ENCODE measurements at regions of chr11 and their contacts with region 1.

Region 1: DNA sequence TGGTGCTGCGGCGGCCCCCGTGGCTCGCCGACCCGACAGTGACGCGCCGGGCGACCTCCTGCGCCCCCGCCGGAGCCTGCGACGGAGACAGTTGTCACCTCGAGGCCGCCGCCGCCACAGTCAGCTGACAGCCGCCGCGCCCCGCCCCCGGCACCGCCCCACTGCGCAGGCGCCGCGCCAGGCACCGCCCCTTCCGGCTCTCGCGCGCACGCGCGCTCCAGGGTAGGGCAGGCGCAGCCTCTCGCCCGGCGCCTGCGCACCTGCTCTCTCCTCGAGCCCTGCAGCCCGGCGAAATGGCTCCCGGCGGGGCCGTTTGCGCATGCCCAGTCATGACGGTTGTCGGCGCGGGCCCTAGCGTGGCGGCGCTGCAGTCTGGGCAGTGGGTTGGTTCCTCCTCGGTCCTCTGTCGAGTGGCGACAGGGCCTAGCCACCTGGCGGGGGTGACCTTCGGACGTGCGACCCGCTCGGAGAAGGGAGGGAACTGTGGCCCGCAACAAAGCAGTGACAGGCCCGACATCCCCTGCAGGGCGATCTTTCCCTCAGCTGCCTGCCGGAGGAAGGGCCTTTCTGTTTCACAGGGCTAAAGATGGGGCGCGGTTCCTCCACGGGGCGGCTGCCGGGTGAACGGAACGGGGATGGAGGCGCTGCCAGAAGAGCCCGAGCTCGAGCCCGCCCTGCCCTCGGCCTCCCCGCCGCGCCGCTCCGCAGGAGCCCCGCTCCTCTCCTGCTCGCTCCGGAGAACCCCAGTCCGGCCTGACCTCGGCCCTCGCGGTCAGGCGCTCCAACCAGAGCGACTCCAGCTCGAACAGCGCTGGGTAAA is at the start of gene TOLLIP:
- DNase-seq: peak; percentile 92 to 95
- ATAC-seq: peak; percentile 88
- H3K4me3 ChIP-seq: peak within 1 kb of the TSS; percentile 71 to 92 (median 76)
- H3K27ac ChIP-seq: peak within 1 kb of the TSS; percentile 90 to 95 (median 95)
- H3K4me1 ChIP-seq: peaks cover 25 to 39% of the 10 kb centered on the region in 2 donors
- H3K27me3 ChIP-seq: no peaks in the 10 kb centered on the region
- CTCF ChIP-seq: peak; percentile 8 to 45 (median 31)
- POLR2A ChIP-seq: peak; percentile 99
- total RNA-seq, gene TOLLIP: 49.8 to 91.7 (median 85.0) TPM

Region 2: GRCh38 chr11:1262172-1263006 is 47.3 kb before region 1 on chr11:
- in situ Hi-C with region 1: no loop called
- intact Hi-C with region 1: loop called (anchors 1 kb)
- DNase-seq: peak; percentile 86 to 91
- ATAC-seq: peak; percentile 84 to 94
- H3K4me3 ChIP-seq: peak overlapping the region; percentile 58 to 69 (median 64)
- H3K27ac ChIP-seq: peak overlapping the region; percentile 79 to 87 (median 83)
- H3K4me1 ChIP-seq: peaks cover 4 to 18% of the 10 kb centered on the region in 2 donors
- H3K27me3 ChIP-seq: no peaks in the 10 kb centered on the region
- CTCF ChIP-seq: no peak
- POLR2A ChIP-seq: peak; percentile 50 to 52

Region 3: DNA sequence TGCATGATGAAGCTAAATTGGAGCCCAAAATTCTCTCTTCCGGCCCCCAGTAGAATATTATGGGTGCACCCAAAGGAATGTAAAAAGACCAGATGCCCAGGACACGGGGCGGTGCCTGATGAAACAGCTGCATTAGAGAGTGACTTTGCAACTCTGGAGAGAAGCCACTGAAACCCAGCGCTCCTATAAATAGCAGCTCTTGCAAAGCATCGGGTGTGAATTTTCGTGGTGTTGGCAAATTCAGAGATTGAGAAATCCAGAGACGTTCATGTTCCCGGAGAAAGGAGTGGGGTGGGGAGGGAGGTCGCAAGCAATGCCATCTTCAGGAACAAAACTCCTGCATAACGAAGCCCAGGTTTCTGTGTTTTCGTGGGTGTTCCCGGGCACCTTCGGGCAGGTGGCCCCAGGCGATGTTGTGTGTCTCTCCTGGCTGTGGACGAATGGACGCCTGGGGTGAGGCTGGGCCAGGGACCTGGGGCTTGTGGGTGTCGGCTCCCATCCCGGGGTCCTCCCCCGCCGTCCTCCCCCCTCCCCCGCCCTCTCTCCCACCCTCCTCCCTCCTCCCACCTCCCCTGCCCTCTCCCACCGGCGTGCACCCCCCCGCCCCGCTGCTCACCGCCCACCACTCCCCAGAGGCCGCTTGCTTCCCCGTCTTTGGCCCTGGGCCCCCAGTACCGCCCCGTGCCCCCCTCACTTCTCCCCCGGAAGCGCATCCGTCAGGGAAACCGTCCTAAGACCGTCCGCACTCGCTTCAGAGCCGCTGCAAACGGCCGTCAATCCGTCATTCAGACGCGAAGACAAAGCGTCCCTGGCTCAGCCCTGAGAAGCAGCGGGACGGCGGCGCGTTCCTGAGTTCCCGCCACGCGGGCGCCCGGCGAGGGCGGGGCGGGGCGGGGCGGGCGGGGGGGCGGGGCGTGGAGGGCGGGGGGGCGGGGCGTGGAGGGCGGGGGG is 26.4 kb after region 1 on chr11:
- in situ Hi-C with region 1: no loop called
- intact Hi-C with region 1: loop called (anchors 1 kb)
- DNase-seq: peak; percentile 91 to 96
- ATAC-seq: peak; percentile 95
- H3K4me3 ChIP-seq: peak overlapping the region; percentile 53 to 86 (median 61)
- H3K27ac ChIP-seq: peak overlapping the region; percentile 89 to 98 (median 94)
- H3K4me1 ChIP-seq: peaks cover 11 to 12% of the 10 kb centered on the region in 2 donors
- H3K27me3 ChIP-seq: peaks cover 0 to 2% (median 0%) of the 10 kb centered on the region in 3 donors
- CTCF ChIP-seq: no peak
- POLR2A ChIP-seq: peak; percentile 70 to 76

Region 4: DNA sequence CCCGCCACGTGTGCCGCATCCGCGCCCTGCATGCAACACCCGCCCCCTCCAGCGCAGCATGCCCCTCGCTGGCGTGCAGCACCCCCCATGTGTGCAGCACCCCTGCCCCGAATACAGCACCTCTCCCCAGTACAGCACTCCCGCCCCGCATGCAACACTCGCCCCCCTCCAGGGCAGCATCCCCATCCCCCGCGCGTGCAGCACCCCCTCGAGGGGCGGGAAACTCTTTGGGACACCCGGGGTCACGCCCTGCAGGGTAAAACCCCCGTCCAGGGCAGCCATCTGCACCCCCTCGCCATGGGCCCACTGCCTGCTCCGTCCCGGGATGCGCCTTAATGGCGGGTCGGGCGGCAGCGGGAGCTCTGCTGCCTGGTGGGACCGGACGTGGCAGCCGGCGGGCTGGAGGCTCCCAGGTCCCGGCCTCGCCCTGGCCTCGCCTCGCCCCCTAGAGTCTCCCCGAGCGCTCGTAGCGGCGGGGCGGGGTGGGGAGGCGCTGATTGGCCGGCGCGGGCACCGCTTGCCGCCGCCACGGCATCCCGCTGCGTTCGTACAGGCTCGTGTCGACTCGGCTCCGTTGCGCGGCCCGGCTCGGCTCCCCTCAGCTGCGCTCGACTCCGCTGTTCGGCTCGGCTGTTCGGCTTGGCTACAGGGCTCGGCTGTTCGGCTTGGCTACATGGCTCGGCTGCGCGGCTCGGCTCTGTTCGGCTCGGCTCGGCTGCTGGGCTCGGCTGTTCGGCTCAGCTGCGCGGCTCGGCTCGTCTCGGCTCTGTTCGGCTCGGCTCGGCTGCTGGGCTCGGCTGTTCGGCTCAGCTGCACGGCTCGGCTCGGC is 79.6 kb after region 1 on chr11:
- in situ Hi-C with region 1: no loop called
- intact Hi-C with region 1: loop called (anchors 1 kb)
- DNase-seq: peak; percentile 94
- ATAC-seq: peak; percentile 96 to 98
- H3K4me3 ChIP-seq: peak overlapping the region; percentile 44 to 67 (median 50)
- H3K27ac ChIP-seq: peak overlapping the region in 1 of 4 donors; percentile 16
- H3K4me1 ChIP-seq: peaks cover 4 to 8% of the 10 kb centered on the region in 2 donors
- H3K27me3 ChIP-seq: peaks cover 45 to 50% (median 48%) of the 10 kb centered on the region in 3 donors
- CTCF ChIP-seq: peak in 1 of 5 experiments; percentile 32
- POLR2A ChIP-seq: no peak

Region 5: DNA sequence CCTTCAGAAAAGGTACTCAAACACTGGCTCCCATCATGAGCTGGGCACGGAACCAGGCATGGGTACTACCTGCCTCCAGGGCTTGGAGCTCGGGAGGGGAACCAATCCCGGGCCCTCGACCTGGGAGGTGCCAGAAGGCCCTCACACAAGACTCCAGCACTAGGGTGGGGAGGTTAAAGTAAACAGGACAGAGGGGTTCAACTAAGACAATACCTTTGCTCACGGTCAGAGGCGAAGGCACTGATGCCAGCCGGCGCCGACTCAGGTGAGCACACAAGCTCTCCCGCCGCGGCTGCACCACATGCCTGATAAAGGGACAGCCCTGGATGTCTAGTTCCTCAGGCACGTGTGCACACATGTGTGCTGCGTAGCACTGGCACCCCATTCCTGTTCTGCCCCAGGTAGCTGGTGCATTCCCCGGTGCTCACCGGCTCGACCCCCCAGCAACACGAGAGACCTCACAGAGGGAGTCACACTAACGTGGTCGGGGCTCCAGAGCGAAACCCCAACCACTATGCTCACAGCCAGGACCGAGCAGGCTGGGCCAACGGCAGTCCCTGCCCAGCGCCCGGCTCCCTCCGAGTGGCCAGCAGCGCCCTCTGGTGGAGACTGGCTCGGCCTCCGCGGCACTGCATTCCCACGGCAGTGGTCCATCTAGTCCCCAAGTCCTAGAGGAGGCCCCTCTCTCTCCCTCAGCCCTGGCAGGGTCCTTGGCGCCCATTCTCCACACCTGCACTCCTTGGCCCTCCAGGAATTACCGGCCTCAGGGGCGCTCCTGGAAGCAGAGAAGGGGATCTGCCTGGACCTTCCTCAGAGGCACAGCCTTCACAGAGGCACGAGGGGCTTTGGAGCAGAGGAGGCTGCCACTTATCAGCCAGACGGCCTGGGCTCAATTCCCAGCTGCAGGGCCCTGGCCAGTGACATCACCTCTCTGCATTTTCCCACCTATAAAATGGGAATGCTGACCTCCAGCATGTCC is 205.7 kb after region 1 on chr11:
- in situ Hi-C with region 1: loop called in 2 of 4 experiments (anchors 10 to 25 kb)
- intact Hi-C with region 1: no loop called
- DNase-seq: peak; percentile 48 to 64
- ATAC-seq: peak; percentile 85 to 88
- H3K4me3 ChIP-seq: peak overlapping the region in 2 of 4 donors; percentile 20 to 30
- H3K27ac ChIP-seq: peak overlapping the region in 1 of 4 donors; percentile 45
- H3K4me1 ChIP-seq: peaks cover 38 to 50% of the 10 kb centered on the region in 2 donors
- H3K27me3 ChIP-seq: no peaks in the 10 kb centered on the region
- CTCF ChIP-seq: peak; percentile 85 to 97 (median 95)
- POLR2A ChIP-seq: no peak

Region 6: DNA sequence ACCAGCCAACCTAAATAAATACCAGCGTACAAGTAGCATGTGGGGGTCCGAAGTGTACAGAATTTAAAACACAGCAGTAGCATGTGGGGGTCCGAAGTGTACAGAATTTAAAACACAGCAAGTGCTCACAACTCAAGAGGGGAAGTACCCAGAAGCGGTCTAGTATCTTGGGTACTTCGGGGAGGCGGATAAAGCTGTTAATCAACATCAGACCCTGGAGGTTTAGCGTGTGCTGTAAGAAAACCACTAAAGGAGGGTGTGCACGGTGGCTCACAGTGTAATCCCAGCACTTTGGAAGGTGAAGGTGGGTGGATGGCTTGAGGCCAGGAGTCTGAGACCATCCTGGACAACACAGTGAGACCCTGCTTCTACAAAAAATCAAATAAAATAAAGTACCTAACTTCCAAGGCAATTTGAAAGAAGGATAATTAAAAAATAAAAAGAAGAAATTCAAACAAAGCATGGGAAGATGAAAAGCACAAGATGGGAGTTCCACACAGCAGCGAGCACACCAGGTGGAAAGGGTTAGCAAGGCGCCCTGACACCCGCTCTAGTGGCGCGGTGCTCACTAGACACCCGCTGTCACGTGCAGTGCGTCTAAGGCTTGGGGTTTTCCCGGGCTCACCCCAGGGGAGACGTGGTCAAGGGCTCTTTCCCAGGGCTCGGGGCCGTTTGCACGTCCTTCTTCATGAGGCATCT is 211.8 kb after region 1 on chr11:
- in situ Hi-C with region 1: loop called in 2 of 4 experiments (anchors 10 to 25 kb)
- intact Hi-C with region 1: no loop called
- DNase-seq: no peak
- ATAC-seq: no peak
- H3K4me3 ChIP-seq: no peak overlapping the region
- H3K27ac ChIP-seq: no peak overlapping the region
- H3K4me1 ChIP-seq: peaks cover 38% of the 10 kb centered on the region in 2 donors
- H3K27me3 ChIP-seq: no peaks in the 10 kb centered on the region
- CTCF ChIP-seq: no peak
- POLR2A ChIP-seq: no peak

Region 7: DNA sequence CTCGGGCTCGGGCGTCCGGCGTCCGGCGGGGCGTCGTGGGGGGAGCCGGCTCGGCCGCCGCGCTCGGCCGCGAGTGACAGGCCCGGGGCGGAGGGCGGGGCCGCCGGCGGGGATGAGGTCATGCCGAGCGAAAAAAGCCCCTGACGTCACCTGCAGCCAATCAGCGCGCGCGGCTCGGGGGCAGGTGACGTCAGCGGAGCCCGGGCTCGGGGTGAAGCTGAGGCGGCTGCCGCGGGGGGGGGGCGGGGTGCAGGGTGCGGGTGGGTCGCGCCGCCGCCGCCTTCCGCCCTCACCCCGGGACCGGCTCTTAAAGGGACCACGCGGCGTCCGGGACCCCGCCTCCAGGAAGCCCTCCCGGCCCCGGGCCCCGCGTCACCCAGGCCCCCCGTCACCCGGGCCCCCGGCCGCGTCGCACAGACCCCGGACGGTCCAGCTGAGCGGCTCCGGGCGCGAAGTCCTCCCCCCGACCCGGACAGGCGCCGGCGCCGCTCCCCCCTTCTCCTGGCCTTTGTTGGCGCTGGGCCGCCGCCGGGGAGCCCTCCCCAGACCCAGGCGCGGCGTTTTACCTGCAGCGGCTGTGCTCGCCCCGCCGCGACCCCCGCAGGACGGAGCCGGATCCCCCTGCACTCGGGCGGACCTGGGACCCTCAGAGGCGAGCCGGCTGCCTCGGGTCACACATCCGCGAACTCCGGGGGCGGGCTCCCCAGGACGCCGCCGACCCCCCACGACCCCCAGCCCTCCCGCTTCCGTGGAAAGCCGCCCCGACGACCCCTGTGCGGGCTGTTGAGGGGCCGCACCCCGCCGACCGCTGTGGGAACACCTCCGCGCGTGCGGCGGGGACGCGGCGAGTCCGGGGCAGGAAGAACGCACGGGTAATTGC is 262.7 kb after region 1 on chr11 and contains the start of gene DUSP8:
- in situ Hi-C with region 1: no loop called
- intact Hi-C with region 1: loop called (anchors 5 kb)
- DNase-seq: peak; percentile 86 to 89
- ATAC-seq: peak; percentile 76 to 81
- H3K4me3 ChIP-seq: peak within 1 kb of the TSS; percentile 59 to 83 (median 68)
- H3K27ac ChIP-seq: peak within 1 kb of the TSS; percentile 85 to 91 (median 88)
- H3K4me1 ChIP-seq: peaks cover 5 to 54% of the 10 kb centered on the region in 2 donors
- H3K27me3 ChIP-seq: no peaks in the 10 kb centered on the region
- CTCF ChIP-seq: no peak
- POLR2A ChIP-seq: peak; percentile 78 to 86
- total RNA-seq, gene DUSP8: 2.6 to 25.9 (median 6.3) TPM

Measured in gastrocnemius medialis (tissue), 4 donors.